ENCODE measurements at regions of chr3 and their contacts with region 1.

Region 1: GRCh38 chr3:194632809-194633348 is 340 bp downstream of the TMEM44 start:
- DNase-seq: no peak
- H3K4me3 ChIP-seq: peak overlapping the region; percentile 72
- H3K27ac ChIP-seq: no peak overlapping the region
- H3K4me1 ChIP-seq: peaks cover 3% of the 10 kb centered on the region
- CTCF ChIP-seq: no peak

Region 2: GRCh38 chr3:194671900-194672808 is 39.3 kb after region 1 on chr3 and contains the start of gene LSG1:
- CTCF ChIA-PET with region 1: no interaction called
- POLR2A ChIA-PET with region 1: interaction called, 5 read pairs
- intact Hi-C with region 1: loop called (anchors 1 kb)
- DNase-seq: peak; percentile 97
- H3K4me3 ChIP-seq: peak within 1 kb of the TSS; percentile 91
- H3K27ac ChIP-seq: peak within 1 kb of the TSS; percentile 50
- H3K4me1 ChIP-seq: peaks cover 19% of the 10 kb centered on the region
- CTCF ChIP-seq: no peak
- total RNA-seq, gene LSG1: 52.9 and 59.4 TPM in 2 replicates

Region 3: GRCh38 chr3:194824701-194825111 is 191.8 kb after region 1 on chr3:
- CTCF ChIA-PET with region 1: no interaction called
- POLR2A ChIA-PET with region 1: no interaction called
- intact Hi-C with region 1: loop called (anchors 1 kb)
- DNase-seq: no peak
- H3K4me3 ChIP-seq: no peak overlapping the region
- H3K27ac ChIP-seq: no peak overlapping the region
- H3K4me1 ChIP-seq: peaks cover 6% of the 10 kb centered on the region
- CTCF ChIP-seq: no peak

Measured in OCI-LY7 (cell line).